Activated CD4-positive, alpha-beta memory T cell treated with anti-CD3 and anti-CD28 coated beads, Interleukin-2, amount 10 ng/mL, durations not matched to agents 7 days and 5 days (primary cell): ENCODE measurements at regions of chr11 and their contacts with region 1.

Region 1: DNA sequence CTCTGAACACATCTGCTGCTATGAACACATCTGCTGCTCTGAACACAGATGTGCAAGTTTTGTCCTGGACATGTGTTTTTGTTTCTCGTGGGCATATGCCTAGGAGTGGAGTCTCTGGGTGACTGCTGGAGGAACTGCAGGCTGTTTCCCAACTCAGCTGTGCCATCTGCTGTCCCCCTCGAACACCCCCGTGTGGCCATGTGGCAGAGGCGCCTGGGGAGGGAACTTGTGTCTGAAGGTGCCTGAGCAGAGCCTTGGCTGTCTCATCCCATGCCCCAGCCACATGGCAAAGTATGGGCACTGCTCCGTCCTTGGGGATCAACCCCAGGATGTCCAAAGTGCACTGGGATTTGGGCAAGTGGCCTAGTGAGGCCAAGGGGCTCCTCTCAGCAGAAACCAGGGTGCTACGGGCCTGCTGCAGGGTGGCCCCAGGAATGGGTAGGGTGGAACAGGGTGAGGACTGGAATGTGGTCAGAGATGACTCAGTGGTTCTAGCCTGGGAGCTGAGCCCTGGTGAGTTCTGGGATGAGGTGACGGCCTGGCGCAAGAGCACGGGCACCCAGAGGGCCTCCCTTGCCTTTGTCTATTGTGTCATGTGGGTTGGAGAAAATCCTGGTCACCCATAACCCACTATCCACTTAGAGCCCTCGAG is 14.7 kb downstream of the GATD1 start:
- DNase-seq: no peak
- H3K4me3 Mint-ChIP-seq: no peak overlapping the region
- H3K27ac Mint-ChIP-seq: no peak overlapping the region
- H3K4me1 Mint-ChIP-seq: peaks cover 5% of the 10 kb centered on the region
- H3K27me3 Mint-ChIP-seq: no peaks in the 10 kb centered on the region

Region 2: GRCh38 chr11:747158-748006 is 15.2 kb before region 1 on chr11 and contains the start of gene TALDO1:
- CTCF ChIA-PET with region 1: interaction called, 5 read pairs
- POLR2A ChIA-PET with region 1: interaction called, 18 read pairs
- DNase-seq: peak; percentile 89
- H3K4me3 Mint-ChIP-seq: peak within 1 kb of the TSS; percentile 82
- H3K27ac Mint-ChIP-seq: peak within 1 kb of the TSS; percentile 77
- H3K4me1 Mint-ChIP-seq: peaks cover 25% of the 10 kb centered on the region
- H3K27me3 Mint-ChIP-seq: no peaks in the 10 kb centered on the region
- total RNA-seq, gene TALDO1: 215 to 224 TPM